ENCODE measurements at regions of chr11 and their contacts with region 1.

Region 1: GRCh38 chr11:133834682-133835592 is 10.4 kb downstream of the SPATA19 start:
- DNase-seq: no peak
- H3K4me3 ChIP-seq: no peak overlapping the region
- H3K27ac ChIP-seq: no peak overlapping the region
- H3K4me1 ChIP-seq: peaks cover 0 to 8% (median 0%) of the 10 kb centered on the region in 4 donors
- H3K27me3 ChIP-seq: peaks cover 0 to 9% of the 10 kb centered on the region in 2 donors
- CTCF ChIP-seq: peak; percentile 40 to 47

Region 2: DNA sequence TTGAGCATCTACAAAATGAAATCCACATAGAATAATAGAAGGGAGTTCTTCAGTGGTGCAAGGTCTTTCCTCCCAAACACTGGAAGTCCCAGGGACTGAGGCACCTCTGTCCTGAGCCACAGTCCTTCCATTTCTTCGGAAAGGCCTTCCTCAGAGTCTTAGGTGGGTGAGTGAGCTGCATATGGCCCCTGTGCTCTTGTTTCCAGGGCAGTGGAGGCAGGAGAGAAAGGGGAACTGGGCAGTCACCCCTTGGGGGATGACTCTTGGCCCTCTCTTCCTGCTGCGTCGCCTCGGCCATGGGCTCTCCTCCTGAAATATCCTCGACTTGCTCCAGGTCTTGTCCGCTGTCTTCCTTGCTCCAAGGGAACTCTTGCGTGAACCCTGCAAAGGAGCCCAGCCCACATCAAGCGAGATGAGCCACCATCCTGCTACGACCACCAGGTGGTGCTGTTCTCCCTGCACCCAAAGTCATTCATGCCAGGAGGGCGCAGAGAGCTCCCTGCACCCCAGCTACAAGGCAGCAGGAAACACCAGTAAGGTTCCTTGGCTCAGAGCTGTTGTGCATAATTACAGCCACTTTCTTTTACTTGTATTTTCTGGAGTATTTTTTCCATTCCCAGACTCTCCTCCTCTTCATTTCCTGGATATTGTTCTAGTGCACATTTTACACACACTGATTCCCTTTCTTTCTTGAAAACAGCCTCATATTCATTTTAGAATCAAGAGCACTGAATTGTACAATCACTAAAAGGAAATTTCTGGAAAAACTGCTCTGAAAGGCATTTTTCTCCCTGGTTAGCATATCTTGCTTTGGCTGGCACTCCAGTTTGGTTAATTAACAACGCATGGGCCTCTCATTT is 700.4 kb before region 1 on chr11:
- intact Hi-C with region 1: loop called (anchors 10 kb)
- DNase-seq: no peak
- H3K4me3 ChIP-seq: no peak overlapping the region
- H3K27ac ChIP-seq: no peak overlapping the region
- H3K4me1 ChIP-seq: no peaks in the 10 kb centered on the region
- H3K27me3 ChIP-seq: peaks cover 0 to 13% of the 10 kb centered on the region in 2 donors
- CTCF ChIP-seq: peak; percentile 40 to 49

Region 3: DNA sequence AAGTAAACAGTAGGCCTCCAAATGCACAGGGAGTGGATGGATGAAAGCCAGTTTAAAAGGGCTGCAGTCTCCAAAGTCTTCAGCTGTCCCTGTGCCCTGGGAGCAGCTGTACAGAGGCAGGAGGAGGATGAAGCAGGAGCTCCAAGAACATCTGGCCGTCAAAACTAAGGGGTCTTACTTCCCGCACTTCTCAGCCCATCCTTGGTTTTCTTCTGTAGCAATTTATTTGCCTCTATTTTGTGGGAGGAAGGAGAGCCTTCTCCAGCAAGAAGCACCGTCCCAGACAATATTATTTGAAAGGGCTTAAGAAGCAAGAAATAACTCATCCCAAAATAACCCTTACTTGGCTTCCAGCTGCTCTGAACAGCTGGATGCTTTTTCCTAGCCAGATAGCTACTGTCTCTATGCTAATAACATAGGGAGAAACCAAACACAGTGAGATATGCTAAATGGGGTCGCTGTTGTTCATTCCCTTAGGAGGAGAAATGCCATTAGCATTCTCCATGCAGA is 122.8 kb before region 1 on chr11:
- intact Hi-C with region 1: no loop called
- DNase-seq: no peak
- H3K4me3 ChIP-seq: no peak overlapping the region
- H3K27ac ChIP-seq: no peak overlapping the region
- H3K4me1 ChIP-seq: no peaks in the 10 kb centered on the region
- H3K27me3 ChIP-seq: peaks cover 0 to 3% of the 10 kb centered on the region in 2 donors
- CTCF ChIP-seq: no peak